HepG2 (cell line): ENCODE measurements at regions of chr6 and their contacts with region 1.

Region 1: DNA sequence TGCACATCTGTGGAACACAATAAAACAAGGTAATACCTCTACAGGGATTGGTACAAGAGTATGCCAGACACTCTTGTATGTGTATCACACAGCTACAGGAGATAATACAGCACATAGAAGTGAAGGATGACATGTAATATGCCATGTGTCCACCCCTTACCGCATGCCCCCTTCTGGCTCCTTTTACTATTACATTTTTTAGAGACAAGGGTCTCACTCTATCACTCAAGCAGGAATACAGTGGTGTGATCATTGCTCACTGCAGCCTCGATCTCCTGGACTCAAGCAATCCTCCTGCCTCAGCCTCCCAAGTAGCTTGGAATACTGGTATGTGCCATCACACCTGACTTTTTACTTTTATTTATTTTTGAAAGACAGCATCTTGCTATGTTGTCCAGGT is 4.2 kb upstream of the NCR3 start:
- DNase-seq: peak; percentile 61
- ATAC-seq: peak; percentile 68
- H3K4me3 ChIP-seq: no peak overlapping the region
- H3K27ac ChIP-seq: no peak overlapping the region
- H3K4me1 ChIP-seq: peaks cover 19% of the 10 kb centered on the region
- H3K27me3 ChIP-seq: peaks cover 0 to 3% of the 10 kb centered on the region in 2 experiments; a peak in 1 of 5 replicates
- CTCF ChIP-seq: peak; percentile 68
- EP300 ChIP-seq: no peak
- POLR2A ChIP-seq: no peak
- RAD21 ChIP-seq: peak; percentile 45; the same call in 1 of the 2 replicates

Region 2: DNA sequence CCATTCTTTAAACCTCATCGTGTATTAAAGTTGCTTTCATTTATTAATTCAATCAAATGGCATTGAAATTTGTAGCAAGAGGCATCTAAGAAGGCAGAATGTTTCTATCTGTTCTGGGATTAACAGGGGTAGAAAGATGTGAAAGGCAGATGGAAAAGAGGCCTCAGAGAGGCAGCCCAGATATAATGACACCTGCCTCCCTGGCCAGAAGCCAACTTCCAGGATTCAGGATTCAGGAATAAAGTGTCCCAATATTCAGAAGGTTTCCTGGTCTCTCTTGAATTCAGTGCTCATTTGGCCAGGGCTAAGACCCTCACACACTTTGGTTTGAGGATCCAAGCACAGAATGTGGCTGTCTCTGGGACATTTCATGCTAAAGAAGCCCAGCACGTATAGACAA is 280.0 kb before region 1 on chr6:
- CTCF ChIA-PET with region 1: no interaction called
- POLR2A ChIA-PET with region 1: no interaction called
- in situ Hi-C with region 1: no loop called
- intact Hi-C with region 1: loop called (anchors 5 kb)
- DNase-seq: no peak
- ATAC-seq: no peak
- H3K4me3 ChIP-seq: no peak overlapping the region
- H3K27ac ChIP-seq: no peak overlapping the region
- H3K4me1 ChIP-seq: no peaks in the 10 kb centered on the region
- H3K27me3 ChIP-seq: peaks cover 0 to 10% of the 10 kb centered on the region in 2 experiments; a peak in 2 of 5 replicates
- CTCF ChIP-seq: no peak
- EP300 ChIP-seq: no peak
- POLR2A ChIP-seq: no peak
- RAD21 ChIP-seq: no peak

Region 3: GRCh38 chr6:31379850-31380249 is 217.2 kb before region 1 on chr6:
- CTCF ChIA-PET with region 1: no interaction called
- POLR2A ChIA-PET with region 1: no interaction called
- in situ Hi-C with region 1: no loop called
- intact Hi-C with region 1: no loop called
- DNase-seq: no peak
- ATAC-seq: no peak
- H3K4me3 ChIP-seq: no peak overlapping the region
- H3K27ac ChIP-seq: no peak overlapping the region
- H3K4me1 ChIP-seq: peaks cover 16% of the 10 kb centered on the region
- H3K27me3 ChIP-seq: peaks cover 2 to 28% of the 10 kb centered on the region in 2 experiments; a peak in 4 of 5 replicates
- CTCF ChIP-seq: no peak
- EP300 ChIP-seq: no peak
- POLR2A ChIP-seq: no peak
- RAD21 ChIP-seq: no peak

Region 4: DNA sequence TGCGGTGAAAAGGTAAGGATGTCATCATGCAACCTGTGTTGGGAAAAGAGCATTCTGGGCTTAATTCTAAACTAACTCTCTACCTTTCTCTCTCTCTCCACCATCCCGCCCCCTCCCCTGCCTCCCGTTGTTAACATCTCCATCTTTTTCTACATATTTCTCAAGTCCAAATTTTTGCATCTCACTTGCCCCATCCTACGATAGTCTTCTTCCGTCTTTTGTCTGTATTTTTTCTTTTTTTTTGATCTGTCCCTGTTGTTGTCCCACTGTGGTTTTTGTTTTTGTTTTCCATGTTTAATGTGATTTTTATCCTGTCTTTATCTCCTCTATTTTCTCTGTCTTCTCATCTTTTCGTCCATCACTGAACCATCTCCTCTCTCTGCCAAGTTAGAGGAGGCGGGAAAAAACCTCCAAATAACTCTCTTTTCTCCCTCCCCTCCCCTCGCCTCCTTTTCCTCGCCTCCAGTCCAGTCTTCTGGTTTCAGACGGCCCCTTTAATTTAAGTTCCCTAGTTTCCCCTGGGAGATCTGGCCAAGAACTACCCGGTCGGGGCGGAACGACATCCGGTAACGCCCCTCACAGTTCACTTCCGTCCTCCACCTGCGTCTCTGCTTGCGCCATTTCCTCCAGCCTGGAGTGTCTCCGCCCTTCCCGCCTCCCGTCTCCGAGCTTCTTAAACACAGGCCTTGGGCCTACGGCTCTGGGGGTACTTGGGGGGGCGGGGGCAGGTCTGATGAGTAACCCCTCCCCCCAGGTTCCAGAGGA is 49.9 kb before region 1 on chr6 and contains the start of gene NFKBIL1:
- CTCF ChIA-PET with region 1: interaction called, 84 read pairs
- POLR2A ChIA-PET with region 1: interaction called, 36 read pairs
- in situ Hi-C with region 1: loop called (anchors 5 kb)
- intact Hi-C with region 1: loop called (anchors 1 kb)
- DNase-seq: peak; percentile 93
- ATAC-seq: peak; percentile 93
- H3K4me3 ChIP-seq: peak within 1 kb of the TSS; percentile 74 to 93 (median 76)
- H3K27ac ChIP-seq: peak within 1 kb of the TSS; percentile 64
- H3K4me1 ChIP-seq: peaks cover 43% of the 10 kb centered on the region
- H3K27me3 ChIP-seq: no peaks in the 10 kb centered on the region; a peak in 1 of 5 replicates
- CTCF ChIP-seq: peak; percentile 36; the same call in 1 of the 2 replicates
- EP300 ChIP-seq: peak in 1 of 2 experiments; percentile 37; a peak in 1 of 4 replicates
- POLR2A ChIP-seq: peak; percentile 37 to 63; a peak in 3 of 4 replicates
- RAD21 ChIP-seq: peak; percentile 12; the same call in 1 of the 2 replicates
- total RNA-seq, gene NFKBIL1: 13.9 and 19.5 TPM in 2 replicates